Thyroid gland (tissue), 4 donors: ENCODE measurements at regions of chr4 and their contacts with region 1.

Region 1: DNA sequence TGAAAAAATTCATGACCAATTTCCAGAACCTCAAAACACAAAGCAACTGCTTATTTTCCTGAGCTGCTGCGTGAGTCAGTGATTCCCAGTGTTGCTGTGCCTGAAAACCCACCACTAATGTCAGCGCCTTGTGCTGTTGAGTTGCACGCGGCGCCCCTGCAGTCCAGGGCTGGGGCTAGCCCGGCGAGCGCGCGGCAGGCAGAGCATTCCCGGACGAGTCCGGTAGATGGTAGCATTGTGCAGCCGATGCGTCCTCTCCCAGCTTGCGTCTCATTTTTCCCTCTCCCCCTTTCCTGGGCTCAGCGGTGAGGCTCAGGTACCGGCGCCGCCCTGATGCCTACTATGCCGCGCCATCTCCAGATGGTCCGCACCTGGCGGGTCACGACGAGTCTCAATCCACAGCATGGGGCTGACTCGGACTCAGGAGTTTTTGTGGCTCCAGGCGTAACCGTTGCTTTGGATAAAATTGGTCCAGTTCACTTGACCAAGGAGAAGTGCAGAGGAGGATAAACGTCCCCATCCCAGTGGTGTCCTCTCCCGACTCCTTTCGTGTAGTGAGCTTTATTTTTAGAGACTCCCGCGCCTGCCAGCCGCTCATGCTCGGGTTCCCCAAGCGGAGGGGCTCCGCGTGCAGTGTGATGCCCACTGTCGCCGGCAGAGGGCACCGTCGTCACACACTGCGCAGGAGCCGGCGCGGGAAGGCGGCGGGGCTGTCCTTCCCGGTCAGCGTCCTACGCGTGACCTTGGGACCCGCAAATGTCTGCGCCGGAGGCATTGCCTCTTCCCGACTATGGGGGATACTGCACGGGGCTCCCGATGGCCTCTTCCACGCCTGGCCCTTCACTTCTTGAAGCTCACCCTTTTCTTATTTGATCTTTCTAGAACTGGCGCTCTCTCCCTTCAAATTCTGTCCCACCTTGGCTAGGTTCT is 53.6 kb upstream of the IGFBP7 start:
- DNase-seq: peak; percentile 73 to 79
- H3K4me3 ChIP-seq: peak overlapping the region; percentile 21 to 49 (median 37)
- H3K27ac ChIP-seq: peak overlapping the region; percentile 26 to 67 (median 60)
- H3K4me1 ChIP-seq: peaks cover 4% of the 10 kb centered on the region in 2 donors
- H3K27me3 ChIP-seq: no peaks in the 10 kb centered on the region
- CTCF ChIP-seq: peak; percentile 82 to 92 (median 86)
- POLR2A ChIP-seq: no peak

Region 2: GRCh38 chr4:56757821-56758411 is 405.9 kb before region 1 on chr4:
- intact Hi-C with region 1: no loop called
- DNase-seq: peak; percentile 92 to 93
- H3K4me3 ChIP-seq: no peak overlapping the region
- H3K27ac ChIP-seq: peak overlapping the region; percentile 88 to 95 (median 94)
- H3K4me1 ChIP-seq: peaks cover 22 to 29% of the 10 kb centered on the region in 2 donors
- H3K27me3 ChIP-seq: no peaks in the 10 kb centered on the region
- CTCF ChIP-seq: no peak
- POLR2A ChIP-seq: peak in 1 of 2 donors; percentile 62

Region 3: DNA sequence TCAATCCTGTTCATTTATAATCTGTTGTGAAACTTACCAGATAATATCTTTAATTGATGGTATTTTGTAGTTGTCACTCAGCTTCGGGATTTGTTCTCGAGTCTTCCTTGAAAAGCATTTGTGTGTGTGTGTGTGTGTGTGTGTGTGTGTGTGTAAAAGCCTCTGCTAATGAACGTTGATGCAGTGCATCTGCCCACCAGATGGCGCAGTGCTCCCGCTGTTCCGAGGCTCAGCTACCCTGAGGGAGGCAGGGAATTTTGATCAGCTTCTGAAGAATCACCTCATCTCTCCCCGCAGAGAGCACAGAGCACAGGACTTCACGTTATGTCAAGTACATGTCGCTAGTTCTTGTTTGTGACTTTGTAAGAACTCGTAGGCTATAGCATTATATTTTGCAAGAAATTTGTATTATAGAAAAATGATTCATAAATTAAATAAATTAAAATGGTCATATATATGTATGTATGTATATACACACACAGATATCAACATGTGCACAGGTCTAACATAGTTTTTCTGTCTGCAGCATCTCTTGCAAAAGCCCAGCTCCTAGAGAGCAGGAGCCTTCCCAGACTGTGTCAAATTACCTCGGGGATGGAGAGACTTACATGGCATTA is 263.1 kb after region 1 on chr4:
- intact Hi-C with region 1: loop called (anchors 10 kb)
- DNase-seq: peak; percentile 69 to 81
- H3K4me3 ChIP-seq: no peak overlapping the region
- H3K27ac ChIP-seq: no peak overlapping the region
- H3K4me1 ChIP-seq: no peaks in the 10 kb centered on the region
- H3K27me3 ChIP-seq: no peaks in the 10 kb centered on the region
- CTCF ChIP-seq: peak in 5 of 6 experiments; percentile 13 to 88 (median 67)
- POLR2A ChIP-seq: no peak